Thyroid gland (tissue), 4 donors: ENCODE measurements at regions of chr2 and their contacts with region 1.

Region 1: GRCh38 chr2:70086838-70087701 is at the start of gene PCBP1:
- DNase-seq: peak; percentile 94 to 95
- H3K4me3 ChIP-seq: peak within 1 kb of the TSS; percentile 78 to 96 (median 89)
- H3K27ac ChIP-seq: peak within 1 kb of the TSS; percentile 100
- H3K4me1 ChIP-seq: peaks cover 48 to 49% of the 10 kb centered on the region in 2 donors
- H3K27me3 ChIP-seq: no peaks in the 10 kb centered on the region
- CTCF ChIP-seq: no peak
- POLR2A ChIP-seq: peak; percentile 86 to 88
- total RNA-seq, gene PCBP1: 165 to 215 (median 195) TPM

Region 2: DNA sequence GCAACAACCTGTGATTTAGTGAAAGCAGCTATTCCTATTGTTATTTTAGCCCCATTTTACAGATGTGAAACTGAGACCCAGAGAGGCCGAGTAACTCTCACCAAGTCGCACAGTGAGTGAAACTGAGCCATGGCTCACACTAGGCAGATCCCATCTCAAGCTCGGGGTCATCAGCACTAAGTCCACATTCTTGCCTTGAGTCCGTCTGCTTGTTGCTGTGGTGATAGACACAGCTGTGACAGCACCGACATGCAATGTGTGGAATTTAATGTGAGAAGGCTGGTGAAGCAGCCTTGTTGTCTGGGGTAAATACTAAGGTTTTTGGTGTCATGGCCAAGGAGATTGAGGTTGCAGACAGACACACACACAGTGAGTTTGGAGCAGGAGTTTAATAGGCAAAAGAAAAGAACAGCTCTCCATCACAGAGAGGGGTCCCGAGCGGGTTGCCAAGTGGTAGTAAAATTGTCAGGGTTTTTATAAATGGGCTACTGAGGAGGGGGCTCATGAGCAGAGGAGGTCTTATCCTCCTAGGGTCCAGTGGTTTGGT is 297.8 kb before region 1 on chr2:
- intact Hi-C with region 1: no loop called
- DNase-seq: no peak
- H3K4me3 ChIP-seq: no peak overlapping the region
- H3K27ac ChIP-seq: peak overlapping the region in 2 of 3 donors; percentile 33 to 64
- H3K4me1 ChIP-seq: peaks cover 17 to 21% of the 10 kb centered on the region in 2 donors
- H3K27me3 ChIP-seq: no peaks in the 10 kb centered on the region
- CTCF ChIP-seq: no peak
- POLR2A ChIP-seq: no peak

Region 3: DNA sequence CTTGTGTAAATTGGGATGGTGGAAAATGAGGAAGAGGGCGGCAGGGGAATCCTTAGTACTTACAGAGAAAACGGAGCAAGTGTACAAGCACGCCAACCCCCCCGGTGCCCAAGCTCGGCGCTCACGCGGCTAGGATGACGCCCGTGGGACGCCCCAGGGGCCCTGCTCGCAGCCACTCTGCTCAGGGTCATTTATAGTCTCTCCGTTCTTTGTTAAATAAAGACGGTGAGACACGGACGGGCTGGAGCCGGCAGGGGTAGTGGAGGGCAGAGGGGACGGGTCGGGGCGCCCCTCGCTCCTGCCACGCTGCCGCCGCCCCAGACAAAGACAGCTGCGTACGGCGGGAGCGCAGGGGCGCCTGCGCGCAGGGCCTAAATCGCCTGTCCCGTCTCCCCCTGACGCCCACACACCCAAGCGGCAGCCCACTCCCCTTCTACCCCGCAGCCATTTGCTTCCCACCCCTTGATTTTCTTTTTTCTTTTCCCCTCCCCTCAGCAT is 38.0 kb after region 1 on chr2:
- intact Hi-C with region 1: loop called (anchors 5 kb)
- DNase-seq: peak; percentile 57 to 59
- H3K4me3 ChIP-seq: peak overlapping the region; percentile 31 to 43 (median 43)
- H3K27ac ChIP-seq: peak overlapping the region; percentile 89 to 100 (median 97)
- H3K4me1 ChIP-seq: peaks cover 38 to 58% of the 10 kb centered on the region in 2 donors
- H3K27me3 ChIP-seq: no peaks in the 10 kb centered on the region
- CTCF ChIP-seq: no peak
- POLR2A ChIP-seq: peak in 1 of 2 donors; percentile 14

Region 4: GRCh38 chr2:70141212-70141901 is 54.3 kb after region 1 on chr2:
- intact Hi-C with region 1: loop called (anchors 2 kb)
- DNase-seq: peak; percentile 88 to 90
- H3K4me3 ChIP-seq: peak overlapping the region; percentile 3 to 65 (median 3)
- H3K27ac ChIP-seq: peak overlapping the region; percentile 98 to 100 (median 99)
- H3K4me1 ChIP-seq: peaks cover 26 to 36% of the 10 kb centered on the region in 2 donors
- H3K27me3 ChIP-seq: no peaks in the 10 kb centered on the region
- CTCF ChIP-seq: peak in 5 of 6 experiments; percentile 22 to 84 (median 71)
- POLR2A ChIP-seq: peak; percentile 61 to 85